HepG2 (cell line): ENCODE measurements at regions of chr5 and their contacts with region 1.

Region 1: DNA sequence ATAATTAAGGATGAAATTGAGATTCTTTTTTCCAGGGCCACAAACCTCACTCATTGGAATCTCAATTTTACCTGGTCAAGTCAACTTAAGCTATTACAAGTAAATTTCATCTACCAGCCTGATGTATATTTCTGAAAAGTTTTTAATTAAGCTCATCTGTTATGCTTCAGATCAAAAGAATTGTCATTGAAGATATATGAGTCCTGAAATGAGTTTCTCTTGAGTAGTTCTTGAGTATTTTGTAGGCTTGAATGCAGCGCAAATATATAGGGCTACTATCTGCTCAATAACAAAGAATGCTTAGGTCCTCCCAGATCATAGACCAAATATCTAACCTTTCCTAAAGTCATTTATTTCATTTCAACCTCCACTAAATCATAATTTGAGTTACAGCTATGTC is 482.2 kb upstream of the ST8SIA4 start:
- DNase-seq: no peak
- ATAC-seq: no peak
- H3K4me3 ChIP-seq: no peak overlapping the region
- H3K27ac ChIP-seq: no peak overlapping the region
- H3K4me1 ChIP-seq: no peaks in the 10 kb centered on the region
- H3K27me3 ChIP-seq: no peaks in the 10 kb centered on the region
- CTCF ChIP-seq: no peak
- EP300 ChIP-seq: no peak
- POLR2A ChIP-seq: no peak
- RAD21 ChIP-seq: no peak

Region 2: DNA sequence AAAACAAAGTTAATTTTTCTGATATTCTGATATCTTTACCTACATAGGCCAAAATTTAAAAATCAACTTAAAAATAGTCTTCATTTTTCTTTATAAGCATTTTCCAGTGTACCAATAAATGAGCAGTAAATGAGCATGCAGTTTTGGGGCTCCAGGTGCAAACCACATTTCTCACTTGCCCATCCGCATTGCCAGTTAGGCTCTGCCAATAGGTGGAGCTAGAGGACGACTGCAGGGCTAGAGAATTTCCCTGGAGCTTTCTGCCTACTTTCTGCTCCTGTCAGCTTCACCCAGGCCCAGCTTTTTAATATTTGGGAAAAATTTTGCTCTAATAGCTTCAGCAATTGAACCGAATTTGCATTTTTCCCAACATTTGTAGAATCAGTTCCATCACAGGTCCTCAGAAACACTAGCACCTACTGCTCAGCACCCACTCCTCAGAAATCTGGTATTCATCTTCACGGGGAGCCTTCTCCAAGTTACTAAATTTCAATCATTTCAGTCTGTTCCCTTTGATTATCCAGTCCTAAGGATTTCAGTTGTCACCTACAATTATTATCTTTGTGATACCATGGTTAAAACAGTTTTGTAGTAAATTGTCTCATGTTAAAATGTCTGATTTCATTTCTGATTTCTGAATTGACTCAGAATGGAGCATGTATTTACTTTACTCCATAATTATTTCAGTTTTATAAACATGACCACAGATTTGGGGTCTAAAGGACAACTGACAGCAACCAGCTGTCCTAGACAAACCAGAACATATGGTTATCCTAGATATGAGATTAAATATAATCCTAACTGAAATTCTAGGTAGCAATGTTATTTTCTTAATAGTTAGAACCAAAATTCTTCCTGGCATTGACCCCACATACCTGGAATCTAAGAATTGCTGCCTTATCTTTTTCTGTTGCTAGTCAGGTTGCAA is 954.7 kb before region 1 on chr5:
- CTCF ChIA-PET with region 1: interaction called, 4 read pairs
- POLR2A ChIA-PET with region 1: no interaction called
- in situ Hi-C with region 1: no loop called
- intact Hi-C with region 1: loop called (anchors 5 kb)
- DNase-seq: peak; percentile 26
- ATAC-seq: peak; percentile 66
- H3K4me3 ChIP-seq: no peak overlapping the region
- H3K27ac ChIP-seq: no peak overlapping the region
- H3K4me1 ChIP-seq: no peaks in the 10 kb centered on the region
- H3K27me3 ChIP-seq: no peaks in the 10 kb centered on the region
- CTCF ChIP-seq: peak; percentile 76
- EP300 ChIP-seq: no peak
- POLR2A ChIP-seq: no peak
- RAD21 ChIP-seq: no peak; the same call in 1 of the 2 replicates

Region 3: GRCh38 chr5:100623719-100624118 is 761.6 kb before region 1 on chr5:
- CTCF ChIA-PET with region 1: no interaction called
- POLR2A ChIA-PET with region 1: no interaction called
- in situ Hi-C with region 1: no loop called
- intact Hi-C with region 1: loop called (anchors 10 kb)
- DNase-seq: no peak
- ATAC-seq: peak; percentile 36; the same call in 1 of the 3 replicates
- H3K4me3 ChIP-seq: no peak overlapping the region
- H3K27ac ChIP-seq: no peak overlapping the region
- H3K4me1 ChIP-seq: no peaks in the 10 kb centered on the region
- H3K27me3 ChIP-seq: no peaks in the 10 kb centered on the region
- CTCF ChIP-seq: peak; percentile 20; the same call in 1 of the 2 replicates
- EP300 ChIP-seq: no peak
- POLR2A ChIP-seq: no peak
- RAD21 ChIP-seq: no peak

Region 4: DNA sequence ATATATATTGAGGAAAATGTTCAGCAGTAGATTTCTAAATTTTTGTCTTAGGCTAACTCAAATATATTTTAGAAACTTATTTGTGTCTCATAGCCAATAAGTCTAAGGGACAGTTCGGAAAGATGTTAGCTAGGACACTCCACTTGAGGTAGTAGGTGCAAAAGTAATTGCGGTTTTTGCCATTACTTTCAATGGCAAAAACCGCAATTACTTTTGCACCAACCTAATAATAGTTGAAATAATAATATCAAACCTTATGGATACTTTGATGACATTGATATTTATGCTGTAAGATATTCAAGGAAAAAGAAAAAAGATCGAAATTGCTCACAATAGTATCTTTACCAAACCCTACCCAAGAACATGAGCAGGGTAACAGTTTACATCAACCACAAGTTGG is 73.3 kb after region 1 on chr5:
- CTCF ChIA-PET with region 1: no interaction called
- POLR2A ChIA-PET with region 1: no interaction called
- in situ Hi-C with region 1: no loop called
- intact Hi-C with region 1: no loop called
- DNase-seq: no peak
- ATAC-seq: no peak
- H3K4me3 ChIP-seq: no peak overlapping the region
- H3K27ac ChIP-seq: no peak overlapping the region
- H3K4me1 ChIP-seq: no peaks in the 10 kb centered on the region
- H3K27me3 ChIP-seq: no peaks in the 10 kb centered on the region
- CTCF ChIP-seq: no peak
- EP300 ChIP-seq: no peak
- POLR2A ChIP-seq: no peak
- RAD21 ChIP-seq: no peak